ENCODE measurements at regions of chr2 and their contacts with region 1.

Region 1: GRCh38 chr2:127153691-127154158 is 46.8 kb upstream of the BIN1 start:
- DNase-seq: peak; percentile 89
- ATAC-seq: peak; percentile 85
- H3K4me3 ChIP-seq: no peak overlapping the region
- H3K27ac ChIP-seq: peak overlapping the region; percentile 11; the same call in 1 of the 2 replicates
- H3K4me1 ChIP-seq: peaks cover 19% of the 10 kb centered on the region
- H3K27me3 ChIP-seq: no peaks in the 10 kb centered on the region
- CTCF ChIP-seq: no peak
- POLR2A ChIP-seq: no peak
- RAD21 ChIP-seq: peak; percentile 24; the same call in 1 of the 2 replicates

Region 2: GRCh38 chr2:127072970-127073369 is 80.8 kb before region 1 on chr2:
- CTCF ChIA-PET with region 1: interaction called, 6 read pairs
- POLR2A ChIA-PET with region 1: no interaction called
- dilution Hi-C with region 1: no loop called
- in situ Hi-C with region 1: loop called (anchors 5 kb)
- intact Hi-C with region 1: no loop called
- DNase-seq: no peak
- ATAC-seq: no peak
- H3K4me3 ChIP-seq: no peak overlapping the region
- H3K27ac ChIP-seq: no peak overlapping the region
- H3K4me1 ChIP-seq: peaks cover 3% of the 10 kb centered on the region; the same call in 1 of the 2 replicates
- H3K27me3 ChIP-seq: no peaks in the 10 kb centered on the region
- CTCF ChIP-seq: no peak
- POLR2A ChIP-seq: no peak
- RAD21 ChIP-seq: no peak

Region 3: DNA sequence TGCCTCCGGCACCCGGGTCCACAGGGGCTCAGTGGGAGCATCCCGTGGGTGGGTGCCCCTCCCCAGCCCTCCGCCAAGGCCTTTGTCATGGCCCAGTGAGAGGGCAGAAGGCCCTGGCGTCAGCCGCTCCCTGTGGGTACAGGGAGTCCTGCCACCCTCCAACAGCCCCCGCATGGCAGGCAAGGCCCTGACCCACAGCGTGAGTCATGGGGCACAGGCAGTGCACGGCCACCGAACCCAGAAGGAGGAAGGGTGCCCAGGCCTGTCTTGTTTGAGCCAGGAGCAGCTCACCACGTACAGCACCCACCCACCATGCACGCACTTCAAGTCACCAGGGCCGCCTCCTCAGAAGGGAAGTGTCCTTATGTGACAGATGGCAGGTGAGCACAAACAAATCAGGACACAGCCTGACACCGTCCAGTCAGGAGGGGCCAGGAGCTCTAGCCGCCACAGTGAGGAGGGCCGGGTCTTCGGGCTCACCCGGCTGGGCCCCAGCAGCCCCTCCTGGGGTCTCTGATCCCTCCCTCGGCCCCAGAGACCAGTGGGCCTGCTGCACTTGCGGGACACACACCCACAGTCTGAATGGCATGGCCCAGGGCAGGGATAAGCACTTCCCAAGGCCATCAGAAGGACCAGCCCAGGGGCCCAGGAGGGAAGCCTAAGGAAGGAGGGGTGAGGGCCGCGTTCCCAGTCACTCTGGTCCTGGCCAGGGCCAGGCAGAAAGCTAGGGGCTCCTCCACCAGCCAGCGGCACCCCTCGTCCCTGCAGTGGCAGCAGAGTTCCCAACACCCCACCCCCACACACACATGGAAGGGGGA is 72.6 kb before region 1 on chr2:
- CTCF ChIA-PET with region 1: no interaction called
- POLR2A ChIA-PET with region 1: no interaction called
- dilution Hi-C with region 1: no loop called
- in situ Hi-C with region 1: no loop called
- intact Hi-C with region 1: loop called (anchors 5 kb)
- DNase-seq: no peak
- ATAC-seq: no peak
- H3K4me3 ChIP-seq: no peak overlapping the region
- H3K27ac ChIP-seq: no peak overlapping the region
- H3K4me1 ChIP-seq: peaks cover 49% of the 10 kb centered on the region
- H3K27me3 ChIP-seq: no peaks in the 10 kb centered on the region
- CTCF ChIP-seq: no peak
- POLR2A ChIP-seq: no peak
- RAD21 ChIP-seq: no peak